Heart left ventricle (tissue), 16 donors: ENCODE measurements at regions of chr12 and their contacts with region 1.

Region 1: DNA sequence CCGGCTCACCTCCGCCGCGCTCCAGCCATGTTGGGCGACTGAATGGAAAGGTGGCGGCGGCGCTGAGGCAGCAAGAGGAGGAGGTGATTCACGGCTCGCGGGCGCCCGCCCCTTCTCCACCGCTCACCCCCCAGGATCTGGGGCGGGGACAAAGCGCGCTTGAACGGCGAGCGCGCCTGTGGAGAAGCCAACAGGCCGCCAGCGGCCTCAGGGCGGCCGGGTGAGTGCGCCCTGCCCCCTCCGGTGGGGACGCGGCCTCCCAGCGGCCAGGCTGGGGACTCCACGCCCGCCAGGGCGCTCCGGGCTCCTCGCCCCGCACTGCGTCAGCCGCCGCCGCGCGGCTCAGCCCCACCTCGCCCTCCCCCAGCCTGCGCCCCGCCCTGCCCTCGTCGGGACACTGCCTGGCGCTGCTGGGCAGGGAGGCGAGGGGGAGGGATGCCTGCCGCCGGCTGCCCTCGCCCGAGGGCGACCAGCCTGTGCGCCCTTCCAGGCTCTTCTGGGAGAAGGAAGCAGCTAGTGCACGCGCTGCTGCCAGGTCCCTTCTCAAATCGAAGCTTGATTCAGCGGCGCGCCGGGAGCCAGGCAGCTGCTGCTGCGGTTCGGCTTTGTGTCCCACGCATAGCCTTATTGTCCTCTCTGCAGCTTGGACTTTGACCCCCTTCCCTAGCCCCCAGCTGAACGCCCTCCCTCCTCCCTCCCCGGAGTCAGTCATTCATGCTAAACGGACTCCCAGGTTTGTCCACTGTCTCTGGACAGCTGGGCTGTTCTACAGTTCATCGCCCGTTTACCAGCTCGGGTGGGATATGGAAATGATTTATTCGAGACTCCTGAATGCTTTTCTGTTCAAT is at the start of gene KIF21A:
- DNase-seq: peak; percentile 85 to 93 (median 92)
- ATAC-seq: peak; percentile 94 to 98 (median 94)
- H3K4me3 ChIP-seq: peak within 1 kb of the TSS; percentile 65 to 96 (median 81)
- H3K27ac ChIP-seq: peak within 1 kb of the TSS; percentile 51 to 93 (median 86)
- H3K4me1 ChIP-seq: peaks cover 0 to 23% (median 4%) of the 10 kb centered on the region in 12 donors
- H3K27me3 ChIP-seq: peaks cover 0 to 5% (median 0%) of the 10 kb centered on the region in 9 donors
- CTCF ChIP-seq: peak; percentile 29 to 80 (median 61)
- POLR2A ChIP-seq: peak in 1 of 2 donors; percentile 45
- total RNA-seq, gene KIF21A: 38.8 to 53.1 (median 44.5) TPM

Region 2: DNA sequence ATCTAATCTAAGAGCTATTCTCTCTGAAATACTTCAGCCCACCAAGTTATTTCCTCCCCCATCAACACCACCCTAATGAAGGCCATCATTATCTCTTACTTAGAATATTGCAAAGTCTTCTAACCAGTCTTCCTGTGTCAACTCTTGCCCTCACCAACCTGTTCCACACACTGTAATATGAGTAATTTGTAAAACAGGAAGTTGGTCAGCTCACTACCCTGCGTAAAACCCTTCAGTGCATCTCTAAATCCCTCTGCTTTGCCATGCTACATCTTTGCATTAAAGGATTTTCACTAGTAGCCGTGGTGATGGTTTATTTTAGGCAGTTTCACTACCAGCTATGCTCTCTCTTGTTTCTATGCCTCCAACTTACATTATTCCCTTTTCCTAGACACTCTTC is 70.4 kb before region 1 on chr12:
- intact Hi-C with region 1: loop called in 4 of 10 experiments (anchors 5 to 10 kb)
- DNase-seq: no peak
- ATAC-seq: peak in 2 of 4 donors; percentile 11 to 22
- H3K4me3 ChIP-seq: no peak overlapping the region
- H3K27ac ChIP-seq: no peak overlapping the region
- H3K4me1 ChIP-seq: peaks cover 0 to 15% (median under 1%) of the 10 kb centered on the region in 12 donors
- H3K27me3 ChIP-seq: no peaks in the 10 kb centered on the region
- CTCF ChIP-seq: no peak
- POLR2A ChIP-seq: no peak

Region 3: GRCh38 chr12:39393890-39394289 is 49.4 kb before region 1 on chr12:
- intact Hi-C with region 1: loop called in 1 of 10 experiments (anchors 2 kb)
- DNase-seq: no peak
- ATAC-seq: no peak
- H3K4me3 ChIP-seq: no peak overlapping the region
- H3K27ac ChIP-seq: peak overlapping the region in 4 of 12 donors; percentile 11 to 23 (median 14)
- H3K4me1 ChIP-seq: peaks cover 0 to 35% (median 10%) of the 10 kb centered on the region in 12 donors
- H3K27me3 ChIP-seq: no peaks in the 10 kb centered on the region
- CTCF ChIP-seq: no peak
- POLR2A ChIP-seq: no peak

Region 4: GRCh38 chr12:39619660-39620433 is 176.5 kb after region 1 on chr12 and contains the start of gene ABCD2:
- intact Hi-C with region 1: loop called in 4 of 10 experiments (anchors 5 to 10 kb)
- DNase-seq: peak; percentile 68 to 78 (median 73)
- ATAC-seq: peak; percentile 82 to 95 (median 92)
- H3K4me3 ChIP-seq: peak within 1 kb of the TSS; percentile 18 to 74 (median 60)
- H3K27ac ChIP-seq: peak within 1 kb of the TSS; percentile 54 to 88 (median 81)
- H3K4me1 ChIP-seq: peaks cover 0 to 16% (median 0%) of the 10 kb centered on the region in 12 donors
- H3K27me3 ChIP-seq: no peaks in the 10 kb centered on the region
- CTCF ChIP-seq: peak in 3 of 12 donors; percentile 9 to 16 (median 16)
- POLR2A ChIP-seq: peak in 1 of 2 donors; percentile 27
- total RNA-seq, gene ABCD2: 3.4 to 8.6 (median 6.7) TPM